ENCODE measurements at regions of chr1 and their contacts with region 1.

Region 1: DNA sequence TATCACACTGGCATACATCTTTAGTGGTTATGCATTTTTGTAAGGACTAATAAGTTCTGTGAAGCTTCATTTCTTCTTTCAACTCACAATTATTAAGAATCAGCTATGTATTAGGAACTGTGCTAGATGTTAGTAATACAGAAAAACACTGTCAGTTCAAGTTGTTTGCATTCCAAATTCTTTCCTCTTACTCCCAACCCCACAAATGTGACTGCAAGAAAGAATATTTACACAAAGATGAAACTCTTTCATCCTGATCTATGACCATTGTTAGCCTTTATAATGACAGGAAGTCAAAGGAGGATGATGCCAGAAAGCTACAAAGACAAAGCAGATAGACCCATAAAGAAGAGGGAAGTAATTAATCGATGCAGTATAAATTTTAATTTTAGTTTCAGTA is 21.0 kb upstream of the GADD45A start:
- DNase-seq: no peak
- ATAC-seq: no peak
- H3K4me3 ChIP-seq: no peak overlapping the region
- H3K27ac ChIP-seq: no peak overlapping the region
- H3K4me1 ChIP-seq: peaks cover 0 to 4% (median 0%) of the 10 kb centered on the region in 9 donors
- H3K27me3 ChIP-seq: no peaks in the 10 kb centered on the region
- CTCF ChIP-seq: no peak

Region 2: GRCh38 chr1:67590329-67590728 is 73.7 kb before region 1 on chr1:
- intact Hi-C with region 1: loop called in 1 of 10 experiments (anchors 10 kb)
- DNase-seq: peak in 1 of 2 donors; percentile 61
- ATAC-seq: peak; percentile 42 to 88 (median 80)
- H3K4me3 ChIP-seq: no peak overlapping the region
- H3K27ac ChIP-seq: peak overlapping the region in 9 of 10 donors; percentile 26 to 82 (median 67)
- H3K4me1 ChIP-seq: peaks cover 8 to 48% (median 30%) of the 10 kb centered on the region in 9 donors
- H3K27me3 ChIP-seq: no peaks in the 10 kb centered on the region
- CTCF ChIP-seq: no peak